Activated CD4-positive, alpha-beta T cell treated with anti-CD3 and anti-CD28 coated beads for 36 hours (primary cell): ENCODE measurements at regions of chr10 and their contacts with region 1.

Region 1: DNA sequence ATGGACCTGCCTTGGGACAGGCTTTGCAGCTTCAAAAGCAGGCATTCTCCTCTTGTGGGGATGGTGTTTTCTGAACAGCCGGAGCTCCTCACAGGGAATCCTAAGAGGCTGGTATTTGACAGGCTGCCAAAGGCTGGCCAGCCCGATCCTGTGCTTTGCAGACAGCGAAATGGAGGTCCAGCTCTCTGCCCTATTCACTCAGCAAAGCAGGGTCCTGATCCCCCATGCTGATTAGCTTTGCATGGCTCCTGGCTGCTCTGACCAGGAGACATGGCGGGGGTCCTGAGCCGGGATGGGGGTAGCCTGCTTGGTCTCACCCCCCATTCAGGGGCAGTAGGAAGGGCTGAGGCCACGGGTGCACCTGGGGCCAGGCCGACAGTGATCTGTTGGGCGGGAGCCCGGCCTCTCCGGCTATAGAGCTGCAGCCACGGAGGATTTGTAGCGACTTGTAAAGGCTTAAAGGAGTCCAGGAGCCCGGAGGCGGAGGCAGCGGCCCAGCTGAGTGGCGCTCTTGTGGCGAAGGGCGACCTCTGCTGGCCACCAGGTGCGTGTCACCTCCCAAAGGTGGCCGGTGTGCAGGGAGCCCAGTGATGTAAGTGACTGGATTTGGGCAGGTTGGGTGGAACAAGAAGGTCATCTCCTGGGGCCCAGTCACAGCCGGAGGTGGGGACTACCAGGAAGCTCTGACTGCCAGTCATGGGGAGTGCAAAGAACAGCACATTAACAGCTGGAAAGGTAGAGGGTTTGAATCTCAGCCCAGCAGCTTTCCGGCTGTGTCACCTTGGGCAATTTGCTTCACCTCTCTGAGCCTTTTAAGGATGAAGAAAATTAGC is 126.5 kb downstream of the ZMIZ1 start:
- DNase-seq: peak; percentile 89
- ATAC-seq: peak; percentile 93
- H3K4me3 Mint-ChIP-seq: no peak overlapping the region
- H3K27ac Mint-ChIP-seq: no peak overlapping the region
- H3K4me1 Mint-ChIP-seq: no peaks in the 10 kb centered on the region
- H3K27me3 Mint-ChIP-seq: no peaks in the 10 kb centered on the region

Region 2: GRCh38 chr10:77710759-77711682 is 1484.3 kb before region 1 on chr10:
- CTCF ChIA-PET with region 1: no interaction called
- POLR2A ChIA-PET with region 1: no interaction called
- intact Hi-C with region 1: loop called in 1 of 2 experiments (anchors 10 kb)
- DNase-seq: peak; percentile 86
- ATAC-seq: peak; percentile 96
- H3K4me3 Mint-ChIP-seq: no peak overlapping the region
- H3K27ac Mint-ChIP-seq: peak overlapping the region; percentile 43
- H3K4me1 Mint-ChIP-seq: peaks cover 14% of the 10 kb centered on the region
- H3K27me3 Mint-ChIP-seq: peaks cover 17% of the 10 kb centered on the region

Region 3: DNA sequence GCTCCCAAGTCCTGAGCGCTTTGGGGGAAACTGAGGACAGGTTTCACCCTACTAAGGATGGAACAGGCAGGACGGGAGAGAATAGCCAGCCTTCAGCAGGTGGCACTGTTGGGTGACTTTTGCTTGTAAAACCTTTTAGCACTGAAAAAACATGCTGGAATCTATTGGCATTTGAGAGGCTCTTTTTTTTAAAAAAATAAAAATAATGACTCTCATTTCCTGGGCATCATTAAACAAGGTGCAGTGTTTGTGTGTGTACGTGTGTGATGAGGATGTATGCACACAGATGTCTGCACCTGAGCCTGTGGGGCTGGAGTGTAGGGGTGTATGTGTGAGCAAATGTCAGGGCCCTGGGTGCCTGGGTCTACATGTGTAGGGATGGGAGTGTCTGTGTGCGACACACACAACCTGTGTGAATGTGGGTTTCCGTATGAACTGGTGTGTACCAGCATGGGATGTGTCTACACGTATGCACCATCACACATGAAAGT is 983.7 kb before region 1 on chr10:
- CTCF ChIA-PET with region 1: interaction called, 4 read pairs
- POLR2A ChIA-PET with region 1: no interaction called
- intact Hi-C with region 1: loop called in 1 of 2 experiments (anchors 5 kb)
- DNase-seq: peak; percentile 42
- ATAC-seq: no peak
- H3K4me3 Mint-ChIP-seq: no peak overlapping the region
- H3K27ac Mint-ChIP-seq: no peak overlapping the region
- H3K4me1 Mint-ChIP-seq: peaks cover 2% of the 10 kb centered on the region
- H3K27me3 Mint-ChIP-seq: peaks cover 8% of the 10 kb centered on the region

Region 4: DNA sequence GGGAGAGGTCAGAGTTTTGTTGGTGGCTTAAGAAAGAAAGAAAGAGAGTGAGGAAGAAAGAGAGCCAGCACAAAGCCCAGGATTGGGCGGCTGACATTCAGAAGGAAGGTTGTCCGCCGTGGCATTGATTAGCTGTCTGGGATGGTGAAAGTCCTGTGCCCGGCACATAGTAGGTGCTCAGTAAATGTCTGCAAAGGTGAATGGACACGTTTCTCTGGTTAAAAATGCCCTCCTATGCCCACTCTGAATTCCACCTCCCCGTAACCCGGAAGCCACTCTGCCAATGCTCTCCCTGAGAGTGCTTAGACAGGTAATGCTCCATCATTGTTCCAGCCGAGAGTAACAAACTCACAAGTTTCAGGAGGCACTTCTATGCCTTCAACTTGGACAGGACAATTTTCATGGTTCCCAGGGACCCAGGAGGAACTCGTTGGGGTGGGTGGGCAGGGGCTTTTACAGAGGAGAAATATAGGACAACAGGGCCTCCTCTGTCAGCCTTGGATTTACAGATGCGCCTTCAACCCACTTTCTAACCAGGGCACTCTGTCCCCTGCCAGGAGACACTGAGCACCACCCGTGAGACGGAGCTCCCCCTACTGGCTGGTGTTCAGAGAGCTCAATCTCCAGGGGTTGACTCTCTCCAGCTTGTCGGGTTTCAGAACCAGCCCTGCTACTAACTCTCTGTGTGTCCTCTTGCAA is 538.0 kb before region 1 on chr10:
- CTCF ChIA-PET with region 1: interaction called, 18 read pairs
- POLR2A ChIA-PET with region 1: no interaction called
- intact Hi-C with region 1: loop called (anchors 2 to 5 kb)
- DNase-seq: peak; percentile 86
- ATAC-seq: peak; percentile 86
- H3K4me3 Mint-ChIP-seq: no peak overlapping the region
- H3K27ac Mint-ChIP-seq: no peak overlapping the region
- H3K4me1 Mint-ChIP-seq: no peaks in the 10 kb centered on the region
- H3K27me3 Mint-ChIP-seq: peaks cover 16% of the 10 kb centered on the region

Region 5: GRCh38 chr10:78937800-78938694 is 257.3 kb before region 1 on chr10:
- CTCF ChIA-PET with region 1: interaction called, 4 read pairs
- POLR2A ChIA-PET with region 1: no interaction called
- intact Hi-C with region 1: loop called in 1 of 2 experiments (anchors 2 kb)
- DNase-seq: peak; percentile 37
- ATAC-seq: peak; percentile 72
- H3K4me3 Mint-ChIP-seq: no peak overlapping the region
- H3K27ac Mint-ChIP-seq: no peak overlapping the region
- H3K4me1 Mint-ChIP-seq: peaks cover 2% of the 10 kb centered on the region
- H3K27me3 Mint-ChIP-seq: no peaks in the 10 kb centered on the region

Region 6: GRCh38 chr10:79014796-79015195 is 180.5 kb before region 1 on chr10:
- CTCF ChIA-PET with region 1: no interaction called
- POLR2A ChIA-PET with region 1: no interaction called
- intact Hi-C with region 1: no loop called
- DNase-seq: no peak
- ATAC-seq: no peak
- H3K4me3 Mint-ChIP-seq: no peak overlapping the region
- H3K27ac Mint-ChIP-seq: no peak overlapping the region
- H3K4me1 Mint-ChIP-seq: no peaks in the 10 kb centered on the region
- H3K27me3 Mint-ChIP-seq: no peaks in the 10 kb centered on the region

Region 7: DNA sequence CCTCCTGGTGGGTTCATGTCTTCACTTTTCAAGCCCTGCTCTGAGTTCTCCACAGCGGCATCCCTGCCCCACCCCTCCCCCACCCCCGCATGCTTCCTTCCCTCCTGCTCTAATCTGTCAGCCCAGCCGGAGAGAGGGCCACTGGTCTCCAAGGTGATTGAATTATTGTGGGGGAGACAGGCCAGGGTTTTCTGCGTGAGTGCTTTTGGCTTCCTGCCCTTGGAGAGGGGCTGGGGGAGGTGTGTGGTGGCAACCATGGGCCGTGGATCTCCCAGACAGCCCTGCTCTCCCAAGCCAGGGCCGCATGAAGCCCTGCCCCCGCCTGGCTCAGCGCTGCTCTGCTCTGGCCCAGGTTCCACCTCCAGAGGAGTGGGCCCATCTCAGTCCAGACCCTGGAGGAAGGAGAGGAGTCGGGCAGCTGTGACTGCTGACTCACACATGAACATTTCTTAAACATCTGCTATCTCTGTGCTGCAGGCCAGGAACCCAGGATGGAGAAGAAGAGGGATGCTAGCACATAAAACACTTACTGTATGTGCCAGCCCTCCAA is 16.6 kb before region 1 on chr10:
- CTCF ChIA-PET with region 1: interaction called, 11 read pairs
- POLR2A ChIA-PET with region 1: no interaction called
- intact Hi-C with region 1: no loop called
- DNase-seq: no peak
- ATAC-seq: no peak
- H3K4me3 Mint-ChIP-seq: no peak overlapping the region
- H3K27ac Mint-ChIP-seq: no peak overlapping the region
- H3K4me1 Mint-ChIP-seq: no peaks in the 10 kb centered on the region
- H3K27me3 Mint-ChIP-seq: no peaks in the 10 kb centered on the region

Region 8: DNA sequence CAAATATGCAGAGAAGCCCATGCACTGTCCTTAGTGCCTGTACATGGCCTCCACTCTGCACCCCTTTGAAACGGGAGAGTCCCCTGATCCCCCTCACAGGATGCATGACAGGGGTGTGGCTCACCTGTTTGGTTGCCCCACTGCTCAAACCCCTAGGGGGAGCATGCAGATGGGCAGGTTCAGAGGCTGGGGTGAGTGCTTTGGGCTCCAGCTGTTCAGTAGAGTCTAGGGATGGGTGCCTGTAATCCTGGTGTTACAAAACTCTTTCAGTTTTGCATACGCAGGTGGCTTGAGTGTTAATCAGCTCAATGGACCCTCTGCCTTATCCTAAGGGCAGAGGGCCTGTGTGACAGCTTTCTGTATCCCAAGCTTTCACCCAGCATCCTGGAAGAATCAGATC is 407.6 kb after region 1 on chr10:
- CTCF ChIA-PET with region 1: no interaction called
- POLR2A ChIA-PET with region 1: no interaction called
- intact Hi-C with region 1: no loop called
- DNase-seq: no peak
- ATAC-seq: no peak
- H3K4me3 Mint-ChIP-seq: no peak overlapping the region
- H3K27ac Mint-ChIP-seq: no peak overlapping the region
- H3K4me1 Mint-ChIP-seq: no peaks in the 10 kb centered on the region
- H3K27me3 Mint-ChIP-seq: peaks cover 4% of the 10 kb centered on the region